ENCODE measurements at regions of chr1 and their contacts with region 1.

Region 1: DNA sequence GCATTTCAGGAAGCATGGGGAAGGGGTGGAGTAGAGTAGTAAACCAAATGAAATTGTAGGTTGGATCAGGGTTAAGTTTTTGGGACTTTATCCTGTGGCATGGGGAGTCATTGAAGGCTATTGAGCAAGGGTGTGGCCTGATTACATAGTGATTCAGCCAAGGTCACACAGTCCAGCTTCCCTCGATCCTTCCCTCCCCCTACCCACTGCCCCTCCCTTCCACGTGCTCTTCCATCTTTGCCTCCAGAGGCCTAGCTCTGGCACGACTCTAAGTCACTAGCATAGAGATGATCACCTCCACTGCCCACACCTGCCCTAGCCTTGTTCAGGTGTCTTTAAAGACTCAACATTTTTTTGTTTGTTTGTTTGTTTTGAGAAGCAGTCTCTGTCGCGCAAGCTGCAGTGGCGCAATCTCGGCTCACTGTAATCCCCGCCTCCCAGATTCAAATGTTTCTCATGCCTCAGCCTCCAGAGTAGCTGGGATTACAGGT is 37.2 kb upstream of the SLC9A1 start:
- DNase-seq: peak; percentile 41
- H3K4me3 ChIP-seq: no peak overlapping the region
- H3K27ac ChIP-seq: no peak overlapping the region
- H3K4me1 ChIP-seq: peaks cover 14% of the 10 kb centered on the region
- H3K27me3 ChIP-seq: no peaks in the 10 kb centered on the region
- CTCF ChIP-seq: no peak

Region 2: DNA sequence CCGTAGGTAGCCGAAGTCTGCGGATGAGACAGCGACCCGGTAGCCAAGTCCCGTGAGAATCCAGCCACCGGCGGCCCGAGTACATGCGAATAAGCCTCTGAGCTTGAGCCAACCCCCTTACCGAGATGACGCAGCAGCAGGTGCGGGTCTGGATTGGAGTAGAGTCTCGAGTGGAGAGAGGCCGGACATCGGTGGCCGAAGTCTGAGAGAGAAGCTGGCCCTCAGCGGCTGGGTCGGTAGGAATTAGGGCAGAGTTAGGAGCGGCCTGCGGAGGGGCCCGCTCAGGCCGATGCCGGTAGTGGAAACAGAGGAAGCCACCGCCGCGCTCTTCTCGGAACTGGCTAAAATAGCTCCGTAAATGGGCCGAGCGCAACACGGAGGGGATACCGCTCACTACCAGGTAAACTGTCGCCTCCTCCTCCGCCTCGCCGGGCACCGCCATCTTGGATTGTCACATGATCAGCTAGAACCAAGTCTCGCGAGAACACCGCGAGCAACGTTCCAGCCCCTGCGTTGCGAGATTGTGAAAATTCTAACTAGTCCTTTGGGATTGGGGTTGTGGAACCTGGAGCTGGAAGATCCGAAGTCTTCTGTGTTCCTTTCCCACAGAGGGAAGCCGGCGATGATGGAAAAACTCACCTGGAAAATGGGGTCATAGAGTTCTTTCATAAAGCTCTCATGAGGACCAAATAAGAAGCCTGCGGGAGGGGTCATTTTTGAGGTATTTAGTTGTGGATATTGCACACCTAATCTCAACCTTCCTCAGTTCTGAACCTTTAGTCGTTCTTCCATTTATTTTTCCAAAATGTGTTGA is 291.9 kb before region 1 on chr1 and contains the start of gene GPATCH3:
- CTCF ChIA-PET with region 1: no interaction called
- dilution Hi-C with region 1: no loop called
- in situ Hi-C with region 1: no loop called
- intact Hi-C with region 1: no loop called
- DNase-seq: peak; percentile 91
- H3K4me3 ChIP-seq: peak within 1 kb of the TSS; percentile 66 to 90 (median 70)
- H3K27ac ChIP-seq: peak within 1 kb of the TSS; percentile 91
- H3K4me1 ChIP-seq: peaks cover 23% of the 10 kb centered on the region
- H3K27me3 ChIP-seq: no peaks in the 10 kb centered on the region
- CTCF ChIP-seq: no peak
- total RNA-seq, gene GPATCH3: 10.8 to 19.4 TPM

Region 3: DNA sequence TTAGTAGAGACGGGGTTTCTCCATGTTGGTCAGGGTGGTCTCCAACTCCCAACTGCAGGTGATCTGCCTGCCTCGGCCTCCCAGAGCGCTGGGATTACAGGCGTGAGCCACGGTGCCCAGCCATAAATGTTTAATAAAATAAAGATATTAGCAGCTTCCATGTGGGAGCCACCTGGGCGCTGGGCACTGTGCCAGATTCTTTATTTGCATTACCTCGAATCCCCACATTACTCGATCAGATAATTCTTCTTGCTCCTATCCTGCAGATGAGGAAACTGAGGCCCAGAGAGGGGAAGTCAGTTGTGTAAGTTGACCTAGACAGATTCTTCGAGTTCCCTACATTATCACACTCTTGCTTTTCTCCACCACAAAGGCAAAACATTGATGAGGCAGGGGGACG is 154.6 kb before region 1 on chr1:
- CTCF ChIA-PET with region 1: no interaction called
- dilution Hi-C with region 1: loop called (anchors 5 kb)
- in situ Hi-C with region 1: no loop called
- intact Hi-C with region 1: no loop called
- DNase-seq: no peak
- H3K4me3 ChIP-seq: no peak overlapping the region
- H3K27ac ChIP-seq: no peak overlapping the region
- H3K4me1 ChIP-seq: peaks cover 11% of the 10 kb centered on the region
- H3K27me3 ChIP-seq: no peaks in the 10 kb centered on the region
- CTCF ChIP-seq: no peak

Region 4: GRCh38 chr1:27058966-27059669 is 133.0 kb before region 1 on chr1:
- CTCF ChIA-PET with region 1: no interaction called
- dilution Hi-C with region 1: no loop called
- in situ Hi-C with region 1: no loop called
- intact Hi-C with region 1: no loop called
- DNase-seq: no peak
- H3K4me3 ChIP-seq: no peak overlapping the region
- H3K27ac ChIP-seq: no peak overlapping the region
- H3K4me1 ChIP-seq: peaks cover 5% of the 10 kb centered on the region
- H3K27me3 ChIP-seq: no peaks in the 10 kb centered on the region
- CTCF ChIP-seq: no peak

Region 5: DNA sequence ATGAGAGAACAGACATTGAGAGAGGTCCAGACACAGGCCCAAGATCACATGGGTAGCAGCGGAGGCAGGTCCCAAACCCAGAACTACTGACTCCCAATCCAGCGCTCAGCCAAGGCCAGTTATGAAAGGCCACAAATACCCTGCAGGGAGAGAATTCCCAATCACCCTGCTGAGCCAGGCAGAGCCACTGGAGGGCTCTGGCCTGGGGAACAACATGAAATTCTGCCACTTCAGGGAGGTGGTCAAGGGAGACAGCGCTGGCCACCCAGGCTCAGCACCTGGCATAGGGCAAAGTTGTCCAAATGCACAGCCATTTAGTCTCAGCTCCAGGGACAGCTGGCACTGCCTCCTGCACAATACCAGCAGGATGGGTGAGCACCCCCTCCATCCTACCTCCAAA is 64.7 kb before region 1 on chr1:
- CTCF ChIA-PET with region 1: no interaction called
- dilution Hi-C with region 1: loop called (anchors 5 kb)
- in situ Hi-C with region 1: no loop called
- intact Hi-C with region 1: no loop called
- DNase-seq: no peak
- H3K4me3 ChIP-seq: no peak overlapping the region
- H3K27ac ChIP-seq: no peak overlapping the region
- H3K4me1 ChIP-seq: peaks cover 10% of the 10 kb centered on the region
- H3K27me3 ChIP-seq: no peaks in the 10 kb centered on the region
- CTCF ChIP-seq: peak in 1 of 2 donors; percentile 30

Region 6: GRCh38 chr1:27166351-27166802 is 25.7 kb before region 1 on chr1:
- CTCF ChIA-PET with region 1: interaction called, 4 read pairs
- dilution Hi-C with region 1: no loop called
- in situ Hi-C with region 1: no loop called
- intact Hi-C with region 1: loop called (anchors 1 kb)
- DNase-seq: peak; percentile 70
- H3K4me3 ChIP-seq: no peak overlapping the region
- H3K27ac ChIP-seq: no peak overlapping the region
- H3K4me1 ChIP-seq: peaks cover 9% of the 10 kb centered on the region
- H3K27me3 ChIP-seq: no peaks in the 10 kb centered on the region
- CTCF ChIP-seq: no peak

Region 7: GRCh38 chr1:27257155-27257554 is 65.1 kb after region 1 on chr1:
- CTCF ChIA-PET with region 1: no interaction called
- dilution Hi-C with region 1: no loop called
- in situ Hi-C with region 1: no loop called
- intact Hi-C with region 1: no loop called
- DNase-seq: no peak
- H3K4me3 ChIP-seq: no peak overlapping the region
- H3K27ac ChIP-seq: no peak overlapping the region
- H3K4me1 ChIP-seq: no peaks in the 10 kb centered on the region
- H3K27me3 ChIP-seq: no peaks in the 10 kb centered on the region
- CTCF ChIP-seq: no peak

Region 8: GRCh38 chr1:27284425-27285273 is 92.6 kb after region 1 on chr1:
- CTCF ChIA-PET with region 1: no interaction called
- dilution Hi-C with region 1: no loop called
- in situ Hi-C with region 1: loop called in 1 of 2 experiments (anchors 5 kb)
- intact Hi-C with region 1: no loop called
- DNase-seq: peak; percentile 55
- H3K4me3 ChIP-seq: no peak overlapping the region
- H3K27ac ChIP-seq: no peak overlapping the region
- H3K4me1 ChIP-seq: no peaks in the 10 kb centered on the region
- H3K27me3 ChIP-seq: no peaks in the 10 kb centered on the region
- CTCF ChIP-seq: peak; percentile 74 to 92

Measured in mammary epithelial cell (primary cell).